ENCODE measurements at regions of chrX and their contacts with region 1.

Region 1: GRCh38 chrX:108439434-108439883 is at the start of gene COL4A5:
- DNase-seq: peak; percentile 72 to 84
- H3K4me3 ChIP-seq: peak within 1 kb of the TSS; percentile 61
- H3K4me3 Mint-ChIP-seq: peak within 1 kb of the TSS; percentile 96
- H3K27ac Mint-ChIP-seq: peak within 1 kb of the TSS; percentile 93
- H3K4me1 ChIP-seq: peaks cover 6% of the 10 kb centered on the region; the same call in 1 of the 2 replicates
- H3K4me1 Mint-ChIP-seq: no peaks in the 10 kb centered on the region
- H3K27me3 ChIP-seq: no peaks in the 10 kb centered on the region
- H3K27me3 Mint-ChIP-seq: no peaks in the 10 kb centered on the region
- CTCF ChIP-seq: no peak
- total RNA-seq, gene COL4A5: 48.1 and 49.8 TPM in 2 replicates

Region 2: GRCh38 chrX:108270739-108271396 is 168.6 kb before region 1 on chrX:
- CTCF ChIA-PET with region 1: no interaction called
- POLR2A ChIA-PET with region 1: no interaction called
- intact Hi-C with region 1: no loop called
- DNase-seq: no peak
- H3K4me3 ChIP-seq: no peak overlapping the region
- H3K4me3 Mint-ChIP-seq: no peak overlapping the region
- H3K27ac Mint-ChIP-seq: no peak overlapping the region
- H3K4me1 ChIP-seq: no peaks in the 10 kb centered on the region
- H3K4me1 Mint-ChIP-seq: no peaks in the 10 kb centered on the region
- H3K27me3 ChIP-seq: no peaks in the 10 kb centered on the region
- H3K27me3 Mint-ChIP-seq: no peaks in the 10 kb centered on the region
- CTCF ChIP-seq: no peak

Region 3: DNA sequence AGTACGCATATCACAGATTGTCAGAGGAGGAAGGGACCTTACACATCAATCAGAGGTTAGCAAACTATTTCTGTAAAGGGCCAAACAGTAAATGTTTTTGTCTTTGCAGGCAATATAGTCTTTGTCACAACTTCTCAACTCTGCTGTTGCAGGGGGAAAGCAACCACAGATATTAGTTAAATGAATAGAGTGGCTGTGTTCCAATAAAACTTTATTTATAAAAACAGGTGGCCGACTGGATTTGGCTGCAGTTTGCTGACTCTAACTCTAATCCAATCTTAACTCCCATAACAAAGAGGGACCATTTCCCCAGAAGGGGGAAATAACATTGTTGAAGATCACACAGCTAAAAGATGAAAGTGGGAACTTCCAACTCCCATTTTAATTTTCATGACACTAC is 69.8 kb before region 1 on chrX:
- CTCF ChIA-PET with region 1: no interaction called
- POLR2A ChIA-PET with region 1: no interaction called
- intact Hi-C with region 1: loop called (anchors 5 kb)
- DNase-seq: no peak
- H3K4me3 ChIP-seq: no peak overlapping the region
- H3K4me3 Mint-ChIP-seq: no peak overlapping the region
- H3K27ac Mint-ChIP-seq: no peak overlapping the region
- H3K4me1 ChIP-seq: peaks cover 26% of the 10 kb centered on the region
- H3K4me1 Mint-ChIP-seq: peaks cover 30% of the 10 kb centered on the region
- H3K27me3 ChIP-seq: no peaks in the 10 kb centered on the region
- H3K27me3 Mint-ChIP-seq: no peaks in the 10 kb centered on the region
- CTCF ChIP-seq: no peak

Region 4: GRCh38 chrX:108399427-108400162 is 39.9 kb before region 1 on chrX:
- CTCF ChIA-PET with region 1: no interaction called
- POLR2A ChIA-PET with region 1: interaction called, 3 read pairs
- intact Hi-C with region 1: loop called (anchors 5 kb)
- DNase-seq: no peak
- H3K4me3 ChIP-seq: no peak overlapping the region
- H3K4me3 Mint-ChIP-seq: no peak overlapping the region
- H3K27ac Mint-ChIP-seq: peak overlapping the region; percentile 20
- H3K4me1 ChIP-seq: peaks cover 35% of the 10 kb centered on the region
- H3K4me1 Mint-ChIP-seq: peaks cover 28% of the 10 kb centered on the region
- H3K27me3 ChIP-seq: no peaks in the 10 kb centered on the region
- H3K27me3 Mint-ChIP-seq: no peaks in the 10 kb centered on the region
- CTCF ChIP-seq: no peak

Region 5: DNA sequence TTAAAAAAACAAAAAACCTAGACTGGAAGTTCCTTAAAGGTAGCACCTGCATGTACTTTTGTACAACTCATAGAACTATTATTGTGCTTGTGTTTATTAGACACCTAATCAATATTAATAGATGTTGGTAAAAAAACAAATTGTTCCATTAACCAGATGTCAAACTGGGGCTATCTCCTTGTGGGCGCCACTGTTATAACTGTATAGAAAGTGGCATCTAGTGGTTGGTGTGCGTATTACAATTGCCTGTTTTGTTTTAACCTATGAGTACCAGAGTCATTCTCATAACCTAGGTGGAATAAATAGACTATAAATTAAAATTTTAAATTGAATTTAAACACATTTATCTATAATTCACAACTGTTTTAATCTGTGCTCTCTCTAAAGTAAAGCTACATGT is 97.5 kb after region 1 on chrX:
- CTCF ChIA-PET with region 1: no interaction called
- POLR2A ChIA-PET with region 1: interaction called, 4 read pairs
- intact Hi-C with region 1: loop called (anchors 2 kb)
- DNase-seq: peak in 1 of 2 experiments; percentile 36
- H3K4me3 ChIP-seq: no peak overlapping the region
- H3K4me3 Mint-ChIP-seq: no peak overlapping the region
- H3K27ac Mint-ChIP-seq: no peak overlapping the region
- H3K4me1 ChIP-seq: no peaks in the 10 kb centered on the region
- H3K4me1 Mint-ChIP-seq: peaks cover 10% of the 10 kb centered on the region
- H3K27me3 ChIP-seq: no peaks in the 10 kb centered on the region
- H3K27me3 Mint-ChIP-seq: no peaks in the 10 kb centered on the region
- CTCF ChIP-seq: peak; percentile 53 to 63

Measured in Caco-2 (cell line).